ENCODE measurements at regions of chr11 and their contacts with region 1.

Region 1: GRCh38 chr11:74988541-74989260 is at the start of gene NEU3:
- DNase-seq: peak; percentile 79
- H3K4me3 Mint-ChIP-seq: peak within 1 kb of the TSS; percentile 94
- H3K27ac Mint-ChIP-seq: peak within 1 kb of the TSS; percentile 87
- H3K4me1 Mint-ChIP-seq: peaks cover 28% of the 10 kb centered on the region
- H3K27me3 Mint-ChIP-seq: no peaks in the 10 kb centered on the region
- total RNA-seq, gene NEU3: 16.5 and 16.6 TPM in 2 replicates

Region 2: DNA sequence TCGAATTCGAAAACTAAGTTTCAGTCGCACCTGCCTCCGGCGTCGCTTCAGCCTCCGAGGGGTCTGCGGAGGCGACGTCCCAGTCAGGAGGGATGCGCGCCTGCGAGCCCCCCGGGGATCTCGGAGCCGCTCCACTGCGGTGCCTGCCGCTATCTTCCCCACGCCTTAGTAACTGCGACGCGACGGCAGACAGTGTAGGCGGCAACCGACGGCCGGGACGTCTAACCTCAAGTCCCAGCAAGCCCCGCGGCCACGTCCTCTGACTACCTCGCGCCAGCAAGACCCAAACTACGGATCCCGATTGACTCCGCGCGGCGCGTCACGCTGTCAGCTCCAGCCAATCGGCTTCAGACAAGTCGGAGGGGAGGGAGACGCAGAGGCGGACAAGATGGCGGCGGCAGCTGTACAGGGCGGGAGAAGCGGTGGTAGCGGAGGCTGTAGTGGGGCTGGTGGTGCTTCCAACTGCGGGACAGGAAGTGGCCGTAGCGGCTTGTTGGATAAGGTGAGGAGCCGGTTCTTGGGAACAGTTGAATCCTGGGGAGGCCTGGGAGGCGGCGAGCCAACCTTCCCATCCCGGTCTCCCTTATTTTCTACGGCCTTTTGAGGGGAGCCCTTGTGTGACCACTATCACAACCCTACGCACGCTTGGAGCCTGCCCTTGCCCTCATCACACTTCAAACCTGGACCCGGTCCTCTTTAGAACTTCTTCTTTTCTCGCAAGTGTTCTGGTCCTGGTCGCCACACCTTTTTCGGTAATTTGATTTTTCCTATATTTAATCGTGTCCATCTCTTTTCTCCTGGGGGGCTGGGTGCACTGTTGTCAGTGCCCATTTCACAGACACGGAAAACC is 39.6 kb before region 1 on chr11 and contains the starts of genes SPCS2 and XRRA1:
- intact Hi-C with region 1: loop called (anchors 1 kb)
- DNase-seq: peak; percentile 98
- H3K4me3 Mint-ChIP-seq: peak within 1 kb of the TSS; percentile 95
- H3K27ac Mint-ChIP-seq: peak within 1 kb of the TSS; percentile 94
- H3K4me1 Mint-ChIP-seq: peaks cover 38% of the 10 kb centered on the region
- H3K27me3 Mint-ChIP-seq: no peaks in the 10 kb centered on the region
- total RNA-seq, gene SPCS2: 169 and 173 TPM in 2 replicates
- total RNA-seq, gene XRRA1: 9.9 and 10.7 TPM in 2 replicates

Region 3: GRCh38 chr11:75022759-75023396 is 34.2 kb after region 1 on chr11:
- intact Hi-C with region 1: no loop called
- DNase-seq: peak; percentile 60
- H3K4me3 Mint-ChIP-seq: no peak overlapping the region
- H3K27ac Mint-ChIP-seq: no peak overlapping the region
- H3K4me1 Mint-ChIP-seq: peaks cover 1% of the 10 kb centered on the region
- H3K27me3 Mint-ChIP-seq: no peaks in the 10 kb centered on the region